Tibial artery (tissue), 4 donors: ENCODE measurements at regions of chr1 and their contacts with region 1.

Region 1: GRCh38 chr1:51627678-51628077 is 10.8 kb downstream of the OSBPL9 start:
- DNase-seq: no peak
- H3K4me3 ChIP-seq: no peak overlapping the region
- H3K27ac ChIP-seq: peak overlapping the region in 1 of 2 donors; percentile 94
- H3K4me1 ChIP-seq: peaks cover 0 to 93% (median 39%) of the 10 kb centered on the region in 4 donors
- H3K27me3 ChIP-seq: no peaks in the 10 kb centered on the region
- CTCF ChIP-seq: peak; percentile 34 to 55

Region 2: DNA sequence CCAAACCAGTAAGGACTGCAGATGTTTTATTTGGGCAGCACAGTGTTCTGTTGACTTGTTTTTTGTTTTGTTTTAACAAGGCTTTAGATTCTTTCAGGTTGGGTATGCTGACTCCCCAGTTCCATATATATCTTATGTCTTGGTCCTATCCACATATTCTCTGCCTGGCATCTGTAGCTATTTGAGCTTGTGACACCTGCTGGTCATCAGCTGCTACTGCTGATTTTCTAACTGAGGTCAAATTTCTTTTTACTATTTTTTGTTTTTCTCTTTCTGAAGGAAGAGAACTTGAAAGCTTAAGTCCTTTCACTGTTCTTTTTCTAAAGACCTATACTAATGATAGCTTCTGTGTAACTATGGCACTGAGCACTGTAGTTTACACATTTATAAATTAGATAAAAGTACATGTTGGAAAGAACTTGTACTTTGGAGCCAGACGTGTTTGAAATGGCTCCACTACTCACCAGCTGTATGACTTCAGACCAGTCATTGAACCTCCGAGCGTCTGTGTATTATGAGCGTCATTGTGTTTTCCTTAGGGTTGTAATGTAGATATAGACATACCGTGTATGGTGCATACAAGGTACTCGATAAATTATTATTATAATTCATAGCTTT is 141.4 kb after region 1 on chr1:
- intact Hi-C with region 1: loop called (anchors 2 kb)
- DNase-seq: no peak
- H3K4me3 ChIP-seq: no peak overlapping the region
- H3K27ac ChIP-seq: peak overlapping the region; percentile 20 to 26
- H3K4me1 ChIP-seq: peaks cover 0 to 51% (median 0%) of the 10 kb centered on the region in 4 donors
- H3K27me3 ChIP-seq: no peaks in the 10 kb centered on the region
- CTCF ChIP-seq: peak; percentile 85 to 87

Region 3: GRCh38 chr1:52056163-52056936 is 428.7 kb after region 1 on chr1 and contains the start of gene BTF3L4:
- intact Hi-C with region 1: loop called (anchors 5 kb)
- DNase-seq: peak; percentile 97
- H3K4me3 ChIP-seq: peak within 1 kb of the TSS; percentile 87 to 90
- H3K27ac ChIP-seq: peak within 1 kb of the TSS; percentile 89 to 94
- H3K4me1 ChIP-seq: peaks cover 0 to 46% (median 31%) of the 10 kb centered on the region in 4 donors
- H3K27me3 ChIP-seq: no peaks in the 10 kb centered on the region
- CTCF ChIP-seq: no peak